Colonic mucosa (tissue), 4 donors: ENCODE measurements at regions of chr7 and their contacts with region 1.

Region 1: GRCh38 chr7:1028031-1028770 is 16.1 kb upstream of the GPR146 start:
- DNase-seq: peak; percentile 91
- H3K4me3 ChIP-seq: peak overlapping the region; percentile 76
- H3K27ac ChIP-seq: peak overlapping the region; percentile 85
- H3K4me1 ChIP-seq: peaks cover 9% of the 10 kb centered on the region
- H3K27me3 ChIP-seq: no peaks in the 10 kb centered on the region
- CTCF ChIP-seq: no peak

Region 2: DNA sequence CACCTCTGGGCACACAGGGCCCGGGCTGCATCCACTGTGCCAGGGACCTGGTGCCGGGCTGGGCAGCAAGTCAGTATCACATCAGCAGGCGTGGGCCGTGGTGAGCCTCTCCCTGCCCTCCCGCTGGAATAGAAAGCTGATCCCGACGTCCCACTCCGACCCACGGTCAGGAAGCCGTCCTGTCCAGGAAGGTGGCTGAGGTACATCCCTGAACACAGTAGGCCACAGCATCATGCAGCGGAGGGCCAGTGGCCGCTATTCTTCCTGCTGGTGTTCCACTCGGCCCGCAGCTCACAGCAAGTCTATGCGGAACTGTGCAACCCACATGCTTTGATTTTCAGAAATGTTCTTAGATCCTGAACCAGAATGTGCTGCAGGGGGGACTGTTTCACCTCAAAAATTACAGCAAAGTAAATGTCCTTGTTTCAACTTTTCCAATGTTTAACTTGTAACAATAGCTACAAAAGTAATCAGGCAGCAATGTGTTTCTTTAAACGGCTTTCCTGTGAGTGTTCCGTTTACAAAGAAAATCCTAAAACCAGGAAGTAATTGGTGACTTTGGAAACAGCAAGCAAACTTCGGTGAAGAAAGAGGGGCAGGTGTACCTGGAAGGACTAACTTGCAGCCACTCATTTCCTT is 15.5 kb after region 1 on chr7:
- intact Hi-C with region 1: loop called (anchors 2 kb)
- DNase-seq: peak; percentile 48
- H3K4me3 ChIP-seq: peak overlapping the region; percentile 29
- H3K27ac ChIP-seq: peak overlapping the region; percentile 84
- H3K4me1 ChIP-seq: peaks cover 20% of the 10 kb centered on the region
- H3K27me3 ChIP-seq: no peaks in the 10 kb centered on the region
- CTCF ChIP-seq: no peak